RWPE1 (cell line): ENCODE measurements at regions of chr9 and their contacts with region 1.

Region 1: GRCh38 chr9:101881508-101881907 is 143.1 kb upstream of the GRIN3A start:
- DNase-seq: no peak
- H3K27ac ChIP-seq: no peak overlapping the region
- CTCF ChIP-seq: no peak

Region 2: DNA sequence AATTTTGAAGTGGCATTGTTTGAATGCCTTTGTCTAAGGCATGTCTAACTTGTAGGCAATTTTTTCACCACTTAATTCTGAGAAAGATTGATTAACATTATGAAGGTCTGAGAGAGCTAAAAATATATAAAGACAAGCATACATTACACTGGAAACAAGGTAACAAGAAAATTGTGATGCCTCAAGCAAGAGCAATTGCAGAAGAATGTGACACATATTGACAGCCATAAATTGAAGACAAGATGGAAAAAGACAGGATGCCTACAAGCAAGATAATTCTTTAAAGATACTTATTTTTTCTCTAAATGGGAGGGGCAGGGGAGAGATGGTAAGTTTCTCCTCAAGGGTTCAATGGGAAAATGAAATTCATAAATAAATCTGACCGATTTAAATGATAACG is 1010.5 kb after region 1 on chr9:
- CTCF ChIA-PET with region 1: interaction called, 10 read pairs
- POLR2A ChIA-PET with region 1: no interaction called
- DNase-seq: no peak
- H3K27ac ChIP-seq: no peak overlapping the region
- CTCF ChIP-seq: no peak